ENCODE measurements at regions of chr14 and their contacts with region 1.

Region 1: DNA sequence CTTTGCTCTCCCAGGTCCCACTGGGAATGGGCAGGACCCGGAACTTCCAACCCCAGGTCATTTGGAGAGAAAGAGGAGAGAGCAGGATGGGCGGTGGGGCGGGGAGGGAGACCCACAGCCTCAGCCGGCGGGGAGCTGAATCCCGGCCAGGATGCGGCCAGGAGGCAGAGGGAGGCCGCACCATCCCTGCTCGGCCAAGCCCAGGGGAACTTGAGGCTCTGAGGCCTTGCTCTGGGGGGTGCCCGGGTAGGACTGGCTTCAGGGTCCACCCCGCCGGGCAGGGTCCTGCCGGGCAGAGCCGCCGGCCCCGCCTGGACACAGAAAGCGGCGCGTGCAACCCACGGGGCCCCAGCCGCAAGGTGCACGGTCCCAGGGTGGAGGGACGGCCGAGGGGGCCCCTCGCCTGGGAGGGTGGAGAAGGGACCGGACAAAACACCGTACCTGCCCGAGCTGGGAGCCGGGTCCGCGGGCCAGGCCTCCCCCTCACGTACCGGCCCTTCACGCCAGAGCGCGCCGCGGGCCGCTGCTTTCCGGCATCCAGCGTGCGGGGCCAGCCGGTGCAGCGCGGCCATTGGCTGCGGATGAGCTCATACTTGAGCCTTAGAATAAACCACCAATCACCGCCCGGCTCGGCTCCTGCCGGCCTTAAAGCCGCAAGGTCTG is at the start of gene RPS6KL1:
- DNase-seq: peak; percentile 88
- H3K4me3 ChIP-seq: peak within 1 kb of the TSS; percentile 88
- H3K27ac ChIP-seq: no peak within 1 kb of the TSS
- H3K4me1 ChIP-seq: peaks cover 13% of the 10 kb centered on the region
- CTCF ChIP-seq: no peak
- total RNA-seq, gene RPS6KL1: 6.1 and 11.3 TPM in 2 replicates

Region 2: GRCh38 chr14:74938531-74939495 is 15.9 kb after region 1 on chr14:
- CTCF ChIA-PET with region 1: interaction called, 3 read pairs
- POLR2A ChIA-PET with region 1: interaction called, 18 read pairs
- intact Hi-C with region 1: loop called (anchors 2 kb)
- DNase-seq: no peak
- H3K4me3 ChIP-seq: no peak overlapping the region
- H3K27ac ChIP-seq: no peak overlapping the region
- H3K4me1 ChIP-seq: peaks cover 50% of the 10 kb centered on the region
- CTCF ChIP-seq: no peak

Measured in OCI-LY7 (cell line).